ENCODE measurements at regions of chr9 and their contacts with region 1.

Region 1: DNA sequence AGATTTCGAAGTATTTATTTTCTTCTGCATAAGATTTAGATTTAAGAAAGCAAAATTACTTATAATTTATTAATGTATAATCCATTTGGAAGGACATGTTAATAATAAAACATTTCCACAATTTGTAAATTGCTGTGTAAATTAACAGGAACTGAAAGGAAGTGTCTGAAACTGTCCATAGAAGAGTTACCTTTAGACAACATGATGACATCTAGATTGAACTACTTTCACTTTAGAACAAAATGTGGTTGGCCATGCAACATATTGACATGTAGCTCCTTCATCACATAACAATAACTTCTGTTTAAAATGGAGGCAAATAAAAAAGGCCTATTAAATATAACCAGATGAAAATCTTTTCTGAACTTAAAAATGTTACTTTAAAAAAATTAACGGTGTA is 1849.5 kb upstream of the ACO1 start:
- DNase-seq: no peak
- H3K4me3 ChIP-seq: no peak overlapping the region
- H3K27ac ChIP-seq: no peak overlapping the region
- H3K4me1 ChIP-seq: no peaks in the 10 kb centered on the region
- H3K27me3 ChIP-seq: no peaks in the 10 kb centered on the region
- CTCF ChIP-seq: no peak
- POLR2A ChIP-seq: no peak

Region 2: DNA sequence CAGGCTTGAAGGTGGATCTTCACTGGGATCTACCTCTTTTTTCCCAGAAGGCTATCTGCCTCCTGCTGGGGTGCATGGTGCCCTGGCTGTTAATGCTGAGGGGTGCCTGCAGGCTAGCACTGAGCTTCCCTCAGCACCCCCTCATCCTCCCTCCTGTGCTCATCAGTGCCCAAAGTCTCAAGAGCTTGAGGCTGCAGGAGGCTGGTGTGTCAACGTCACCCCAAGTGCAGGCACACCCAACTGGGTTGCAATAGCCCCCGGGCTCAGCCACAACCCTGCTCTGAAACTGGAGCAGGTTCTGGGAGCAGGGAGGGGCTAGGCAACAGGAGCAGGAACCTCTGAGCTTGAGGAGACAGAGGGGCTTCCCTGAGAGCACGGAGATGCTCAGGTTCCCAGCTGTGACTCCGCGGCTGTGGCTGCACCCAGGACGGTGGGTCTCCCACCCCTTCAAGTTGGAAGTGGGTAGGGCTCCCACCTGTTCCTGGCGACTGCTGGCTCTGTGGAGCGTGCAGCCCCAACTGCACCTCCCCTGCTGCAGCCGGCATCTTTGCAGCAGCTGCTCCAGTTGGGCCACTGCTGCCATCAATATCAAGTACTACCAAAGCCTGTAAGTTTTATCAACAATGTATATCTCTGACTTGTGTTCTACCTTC is 1695.0 kb before region 1 on chr9:
- intact Hi-C with region 1: loop called (anchors 10 kb)
- DNase-seq: no peak
- H3K4me3 ChIP-seq: no peak overlapping the region
- H3K27ac ChIP-seq: no peak overlapping the region
- H3K4me1 ChIP-seq: no peaks in the 10 kb centered on the region
- H3K27me3 ChIP-seq: no peaks in the 10 kb centered on the region
- CTCF ChIP-seq: no peak
- POLR2A ChIP-seq: no peak

Measured in breast epithelium (tissue), 4 donors.